MCF 10A (cell line): ENCODE measurements at regions of chr20 and their contacts with region 1.

Region 1: DNA sequence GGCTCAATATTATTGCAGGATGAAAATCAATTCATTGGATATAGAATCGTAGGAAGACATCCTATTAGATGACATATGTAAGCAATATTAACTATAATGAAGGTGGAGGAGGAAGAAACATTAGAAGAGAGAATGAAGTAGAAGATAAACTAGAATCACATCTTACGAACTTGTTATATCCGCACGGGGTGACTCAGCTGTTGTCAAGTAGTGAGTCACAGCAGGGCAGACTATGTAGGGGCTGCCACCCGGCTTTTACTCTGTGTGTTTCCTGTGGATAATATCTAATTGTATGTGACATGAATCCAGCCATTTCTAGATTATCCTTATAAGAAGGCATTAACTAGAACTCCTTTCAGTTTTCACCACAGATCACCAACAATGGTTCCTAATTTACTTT is 520.2 kb downstream of the DOK5 start:
- DNase-seq: no peak
- H3K4me3 Mint-ChIP-seq: no peak overlapping the region
- H3K27ac Mint-ChIP-seq: no peak overlapping the region
- H3K4me1 Mint-ChIP-seq: peaks cover 5% of the 10 kb centered on the region
- H3K27me3 Mint-ChIP-seq: peaks cover 39% of the 10 kb centered on the region
- CTCF ChIP-seq: no peak

Region 2: GRCh38 chr20:54980103-54980960 is 15.2 kb before region 1 on chr20:
- CTCF ChIA-PET with region 1: interaction called, 22 read pairs
- POLR2A ChIA-PET with region 1: no interaction called
- intact Hi-C with region 1: no loop called
- DNase-seq: no peak
- H3K4me3 Mint-ChIP-seq: no peak overlapping the region
- H3K27ac Mint-ChIP-seq: no peak overlapping the region
- H3K4me1 Mint-ChIP-seq: no peaks in the 10 kb centered on the region
- H3K27me3 Mint-ChIP-seq: no peaks in the 10 kb centered on the region
- CTCF ChIP-seq: peak; percentile 35